Caco-2 (cell line): ENCODE measurements at regions of chr18 and their contacts with region 1.

Region 1: DNA sequence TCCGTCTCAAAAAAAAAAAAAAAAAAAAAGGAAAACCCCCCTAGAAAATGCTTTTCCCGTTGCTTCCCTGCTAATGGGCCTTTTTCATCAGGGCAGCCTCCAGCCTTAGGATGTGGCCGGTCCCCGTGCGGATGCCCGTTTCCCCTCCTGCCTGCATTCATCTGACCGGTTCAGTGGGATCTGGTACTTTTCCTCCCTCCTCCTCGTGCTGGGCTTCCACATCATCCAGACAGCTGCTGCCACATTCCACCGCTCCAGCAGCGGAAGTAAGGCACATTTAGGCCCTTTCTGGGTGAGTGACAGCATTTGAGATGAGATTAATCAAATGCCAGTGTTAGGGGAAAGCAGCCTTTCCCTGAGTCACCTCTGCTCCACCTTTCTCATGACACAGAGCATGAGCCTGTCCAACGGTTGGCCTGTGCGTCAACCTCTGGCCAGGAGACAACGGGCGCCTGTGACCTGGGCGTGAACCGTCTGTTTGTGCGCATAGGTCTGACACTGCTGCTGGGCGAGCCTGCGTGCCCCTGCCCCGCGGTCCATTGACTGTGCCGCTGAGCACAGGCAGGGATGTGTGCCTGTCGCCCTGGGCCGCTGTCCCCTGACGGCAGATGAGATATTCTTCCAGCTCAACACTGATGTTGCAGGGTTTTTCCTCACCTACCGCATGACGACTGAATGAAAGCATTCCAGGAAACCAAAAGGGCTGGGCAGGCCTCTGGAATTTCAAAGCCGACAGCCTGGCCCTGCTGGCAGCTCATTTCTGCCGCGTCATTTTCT is 174.0 kb downstream of the TGIF1 start:
- DNase-seq: peak; percentile 90 to 93
- H3K4me3 ChIP-seq: peak overlapping the region; percentile 17
- H3K4me3 Mint-ChIP-seq: peak overlapping the region; percentile 97
- H3K27ac Mint-ChIP-seq: peak overlapping the region; percentile 99
- H3K4me1 ChIP-seq: peaks cover 62% of the 10 kb centered on the region
- H3K4me1 Mint-ChIP-seq: peaks cover 50% of the 10 kb centered on the region
- H3K27me3 ChIP-seq: no peaks in the 10 kb centered on the region
- H3K27me3 Mint-ChIP-seq: peaks cover 2% of the 10 kb centered on the region
- CTCF ChIP-seq: no peak

Region 2: DNA sequence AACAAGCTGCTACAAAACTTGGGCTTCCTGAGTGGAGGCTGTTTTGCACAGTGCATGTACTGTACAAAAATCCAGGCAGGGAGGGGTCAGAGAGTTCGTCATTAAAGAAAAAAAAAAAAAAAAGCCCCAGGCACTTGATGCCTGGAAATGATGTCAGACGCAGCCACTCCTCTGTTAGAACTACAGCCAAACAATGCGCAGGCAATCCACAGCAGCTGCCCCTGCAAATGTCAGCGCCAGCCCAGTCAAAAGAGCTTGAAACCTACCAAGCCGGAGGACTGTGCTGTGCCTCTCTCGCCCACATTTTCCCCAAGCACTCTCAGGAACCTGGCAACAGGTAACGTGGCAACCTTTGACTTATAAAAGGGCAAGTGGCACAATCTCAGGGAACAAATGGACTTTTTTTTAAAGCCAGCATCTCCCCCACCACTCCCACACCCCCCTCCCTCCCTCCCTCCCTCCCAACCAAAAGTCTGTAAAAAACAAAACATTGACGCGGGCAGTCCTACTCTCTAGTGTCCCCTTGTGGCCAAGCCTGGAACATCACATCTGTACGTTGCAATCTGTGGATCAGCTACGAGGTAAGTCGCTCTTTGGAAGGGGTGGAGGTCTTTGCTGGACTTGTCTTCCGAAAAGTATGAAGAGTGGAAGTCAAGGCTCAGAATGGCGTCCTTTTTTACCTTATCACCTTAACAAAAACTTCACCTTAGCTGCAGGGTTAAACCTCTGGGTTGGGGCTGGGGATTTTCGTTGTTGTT is 29.9 kb before region 1 on chr18:
- CTCF ChIA-PET with region 1: interaction called, 9 read pairs
- POLR2A ChIA-PET with region 1: interaction called, 23 read pairs
- intact Hi-C with region 1: no loop called
- DNase-seq: peak; percentile 89 to 90
- H3K4me3 ChIP-seq: peak overlapping the region; percentile 39
- H3K4me3 Mint-ChIP-seq: peak overlapping the region; percentile 85
- H3K27ac Mint-ChIP-seq: peak overlapping the region; percentile 87
- H3K4me1 ChIP-seq: peaks cover 47% of the 10 kb centered on the region
- H3K4me1 Mint-ChIP-seq: peaks cover 47% of the 10 kb centered on the region
- H3K27me3 ChIP-seq: no peaks in the 10 kb centered on the region
- H3K27me3 Mint-ChIP-seq: no peaks in the 10 kb centered on the region
- CTCF ChIP-seq: peak; percentile 85 to 93

Region 3: DNA sequence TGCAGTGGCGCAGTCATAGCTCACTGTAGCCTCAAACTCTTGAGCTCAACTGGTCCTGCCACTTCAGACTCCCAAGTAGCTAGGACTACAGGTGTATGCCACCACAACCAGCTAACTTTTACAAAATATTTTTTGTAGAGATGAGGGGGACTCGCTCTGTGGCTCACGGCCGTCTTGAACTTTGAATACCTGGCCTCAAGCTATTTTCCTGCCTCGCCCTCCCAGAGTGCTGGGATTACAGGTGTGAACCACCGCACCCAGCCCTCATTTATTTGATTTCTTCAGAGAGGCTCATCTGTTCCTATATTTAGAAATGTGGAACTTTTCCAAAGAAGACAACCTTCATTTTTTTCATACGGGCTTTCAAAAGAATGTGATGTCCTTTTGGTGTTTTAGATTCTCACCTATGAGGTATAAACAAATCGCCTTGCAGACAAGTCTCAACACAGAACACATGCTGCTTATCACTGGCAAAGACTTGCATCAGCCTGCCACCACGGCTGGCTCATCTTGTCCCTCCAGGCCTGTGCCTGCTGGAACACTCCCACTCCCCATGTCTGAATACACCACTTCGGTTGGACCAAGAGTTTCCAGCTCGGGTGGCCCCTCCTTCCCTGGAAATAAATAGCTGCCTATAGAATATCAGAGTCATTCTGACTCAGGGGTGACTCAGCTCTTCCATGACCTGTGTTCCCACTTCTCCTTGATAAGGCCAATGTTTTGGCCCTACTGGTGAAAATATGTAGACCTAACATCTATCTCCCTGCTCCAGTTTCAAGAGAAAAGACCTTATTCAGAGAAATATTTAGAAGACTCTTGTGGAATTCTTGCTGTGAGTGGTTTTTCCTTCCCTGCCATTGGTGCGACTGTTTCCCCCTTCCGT is 28.7 kb after region 1 on chr18:
- CTCF ChIA-PET with region 1: interaction called, 4 read pairs
- POLR2A ChIA-PET with region 1: interaction called, 22 read pairs
- intact Hi-C with region 1: loop called (anchors 1 kb)
- DNase-seq: peak; percentile 93 to 96
- H3K4me3 ChIP-seq: no peak overlapping the region
- H3K4me3 Mint-ChIP-seq: peak overlapping the region; percentile 67
- H3K27ac Mint-ChIP-seq: peak overlapping the region; percentile 90
- H3K4me1 ChIP-seq: peaks cover 82% of the 10 kb centered on the region
- H3K4me1 Mint-ChIP-seq: peaks cover 52% of the 10 kb centered on the region
- H3K27me3 ChIP-seq: no peaks in the 10 kb centered on the region
- H3K27me3 Mint-ChIP-seq: no peaks in the 10 kb centered on the region
- CTCF ChIP-seq: peak in 1 of 2 experiments; percentile 19

Region 4: GRCh38 chr18:3782901-3783300 is 158.9 kb after region 1 on chr18:
- CTCF ChIA-PET with region 1: no interaction called
- POLR2A ChIA-PET with region 1: no interaction called
- intact Hi-C with region 1: no loop called
- DNase-seq: no peak
- H3K4me3 ChIP-seq: no peak overlapping the region
- H3K4me3 Mint-ChIP-seq: no peak overlapping the region
- H3K27ac Mint-ChIP-seq: no peak overlapping the region
- H3K4me1 ChIP-seq: no peaks in the 10 kb centered on the region
- H3K4me1 Mint-ChIP-seq: no peaks in the 10 kb centered on the region
- H3K27me3 ChIP-seq: no peaks in the 10 kb centered on the region
- H3K27me3 Mint-ChIP-seq: no peaks in the 10 kb centered on the region
- CTCF ChIP-seq: no peak